ENCODE measurements at regions of chr17 and their contacts with region 1.

Region 1: GRCh38 chr17:45135192-45135977 is at the start of gene ACBD4:
- DNase-seq: peak; percentile 99
- H3K4me3 Mint-ChIP-seq: peak within 1 kb of the TSS; percentile 90
- H3K27ac Mint-ChIP-seq: peak within 1 kb of the TSS; percentile 81
- H3K4me1 Mint-ChIP-seq: peaks cover 29% of the 10 kb centered on the region
- H3K27me3 Mint-ChIP-seq: no peaks in the 10 kb centered on the region
- CTCF ChIP-seq: peak; percentile 100
- total RNA-seq, gene ACBD4: 21.8 and 23.2 TPM in 2 replicates

Region 2: GRCh38 chr17:45051060-45051719 is 84.2 kb before region 1 on chr17 and contains the start of gene DCAKD:
- CTCF ChIA-PET with region 1: interaction called, 3 read pairs
- intact Hi-C with region 1: loop called (anchors 5 kb)
- DNase-seq: peak; percentile 99
- H3K4me3 Mint-ChIP-seq: peak within 1 kb of the TSS; percentile 84
- H3K27ac Mint-ChIP-seq: peak within 1 kb of the TSS; percentile 82
- H3K4me1 Mint-ChIP-seq: peaks cover 12% of the 10 kb centered on the region
- H3K27me3 Mint-ChIP-seq: no peaks in the 10 kb centered on the region
- CTCF ChIP-seq: no peak
- total RNA-seq, gene DCAKD: 20.5 and 21.7 TPM in 2 replicates

Region 3: GRCh38 chr17:45148183-45149036 is 13.0 kb after region 1 on chr17 and contains the start of gene HEXIM1:
- CTCF ChIA-PET with region 1: interaction called, 197 read pairs
- intact Hi-C with region 1: no loop called
- DNase-seq: peak; percentile 100
- H3K4me3 Mint-ChIP-seq: peak within 1 kb of the TSS; percentile 98
- H3K27ac Mint-ChIP-seq: peak within 1 kb of the TSS; percentile 100
- H3K4me1 Mint-ChIP-seq: peaks cover 39% of the 10 kb centered on the region
- H3K27me3 Mint-ChIP-seq: peaks cover 14% of the 10 kb centered on the region
- CTCF ChIP-seq: no peak
- total RNA-seq, gene HEXIM1: 57.2 and 64.7 TPM in 2 replicates

Region 4: GRCh38 chr17:45184144-45184543 is 48.8 kb after region 1 on chr17:
- CTCF ChIA-PET with region 1: interaction called, 14 read pairs
- intact Hi-C with region 1: no loop called
- DNase-seq: no peak
- H3K4me3 Mint-ChIP-seq: no peak overlapping the region
- H3K27ac Mint-ChIP-seq: peak overlapping the region; percentile 25
- H3K4me1 Mint-ChIP-seq: peaks cover 25% of the 10 kb centered on the region
- H3K27me3 Mint-ChIP-seq: no peaks in the 10 kb centered on the region
- CTCF ChIP-seq: no peak

Region 5: GRCh38 chr17:45235416-45236281 is 100.3 kb after region 1 on chr17:
- CTCF ChIA-PET with region 1: interaction called, 56 read pairs
- intact Hi-C with region 1: loop called (anchors 1 kb)
- DNase-seq: peak; percentile 86
- H3K4me3 Mint-ChIP-seq: no peak overlapping the region
- H3K27ac Mint-ChIP-seq: no peak overlapping the region
- H3K4me1 Mint-ChIP-seq: peaks cover 13% of the 10 kb centered on the region
- H3K27me3 Mint-ChIP-seq: peaks cover 56% of the 10 kb centered on the region
- CTCF ChIP-seq: peak; percentile 92

Region 6: GRCh38 chr17:45428050-45428617 is 292.7 kb after region 1 on chr17:
- CTCF ChIA-PET with region 1: interaction called, 10 read pairs
- intact Hi-C with region 1: no loop called
- DNase-seq: peak; percentile 96
- H3K4me3 Mint-ChIP-seq: peak overlapping the region; percentile 44
- H3K27ac Mint-ChIP-seq: peak overlapping the region; percentile 71
- H3K4me1 Mint-ChIP-seq: peaks cover 65% of the 10 kb centered on the region
- H3K27me3 Mint-ChIP-seq: no peaks in the 10 kb centered on the region
- CTCF ChIP-seq: peak; percentile 100